Calu3 (cell line): ENCODE measurements at regions of chr1 and their contacts with region 1.

Region 1: DNA sequence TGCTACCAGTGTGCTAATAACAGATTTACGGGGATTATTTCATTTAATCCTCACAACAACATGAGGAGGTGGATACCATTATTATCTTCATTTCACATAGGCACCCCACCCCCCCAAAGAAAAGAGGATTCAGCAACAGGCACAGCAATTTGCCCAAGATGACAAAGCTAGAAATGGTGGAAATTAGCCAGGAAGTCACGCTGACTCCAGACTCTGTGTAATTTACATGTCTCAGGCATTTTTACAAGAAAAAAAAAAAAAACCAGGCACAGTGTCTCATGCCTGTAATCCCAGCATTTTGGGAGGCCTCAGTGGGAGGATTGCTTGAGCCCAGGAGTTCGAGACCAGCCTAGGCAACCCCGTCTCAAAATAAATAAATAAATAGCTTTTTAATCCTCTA is 37.5 kb upstream of the PRDM2 start:
- DNase-seq: no peak
- H3K4me3 Mint-ChIP-seq: no peak overlapping the region
- H3K27ac Mint-ChIP-seq: no peak overlapping the region
- H3K4me1 Mint-ChIP-seq: no peaks in the 10 kb centered on the region
- H3K27me3 Mint-ChIP-seq: no peaks in the 10 kb centered on the region
- CTCF ChIP-seq: no peak

Region 2: GRCh38 chr1:13617108-13617507 is 45.4 kb before region 1 on chr1:
- CTCF ChIA-PET with region 1: no interaction called
- intact Hi-C with region 1: no loop called
- DNase-seq: no peak
- H3K4me3 Mint-ChIP-seq: no peak overlapping the region
- H3K27ac Mint-ChIP-seq: no peak overlapping the region
- H3K4me1 Mint-ChIP-seq: no peaks in the 10 kb centered on the region
- H3K27me3 Mint-ChIP-seq: no peaks in the 10 kb centered on the region
- CTCF ChIP-seq: no peak

Region 3: GRCh38 chr1:13960375-13960987 is 298.0 kb after region 1 on chr1:
- CTCF ChIA-PET with region 1: no interaction called
- intact Hi-C with region 1: loop called (anchors 1 kb)
- DNase-seq: peak; percentile 56
- H3K4me3 Mint-ChIP-seq: no peak overlapping the region
- H3K27ac Mint-ChIP-seq: no peak overlapping the region
- H3K4me1 Mint-ChIP-seq: no peaks in the 10 kb centered on the region
- H3K27me3 Mint-ChIP-seq: peaks cover 24% of the 10 kb centered on the region
- CTCF ChIP-seq: peak; percentile 72